Breast epithelium (tissue), 4 donors: ENCODE measurements at regions of chr9 and their contacts with region 1.

Region 1: DNA sequence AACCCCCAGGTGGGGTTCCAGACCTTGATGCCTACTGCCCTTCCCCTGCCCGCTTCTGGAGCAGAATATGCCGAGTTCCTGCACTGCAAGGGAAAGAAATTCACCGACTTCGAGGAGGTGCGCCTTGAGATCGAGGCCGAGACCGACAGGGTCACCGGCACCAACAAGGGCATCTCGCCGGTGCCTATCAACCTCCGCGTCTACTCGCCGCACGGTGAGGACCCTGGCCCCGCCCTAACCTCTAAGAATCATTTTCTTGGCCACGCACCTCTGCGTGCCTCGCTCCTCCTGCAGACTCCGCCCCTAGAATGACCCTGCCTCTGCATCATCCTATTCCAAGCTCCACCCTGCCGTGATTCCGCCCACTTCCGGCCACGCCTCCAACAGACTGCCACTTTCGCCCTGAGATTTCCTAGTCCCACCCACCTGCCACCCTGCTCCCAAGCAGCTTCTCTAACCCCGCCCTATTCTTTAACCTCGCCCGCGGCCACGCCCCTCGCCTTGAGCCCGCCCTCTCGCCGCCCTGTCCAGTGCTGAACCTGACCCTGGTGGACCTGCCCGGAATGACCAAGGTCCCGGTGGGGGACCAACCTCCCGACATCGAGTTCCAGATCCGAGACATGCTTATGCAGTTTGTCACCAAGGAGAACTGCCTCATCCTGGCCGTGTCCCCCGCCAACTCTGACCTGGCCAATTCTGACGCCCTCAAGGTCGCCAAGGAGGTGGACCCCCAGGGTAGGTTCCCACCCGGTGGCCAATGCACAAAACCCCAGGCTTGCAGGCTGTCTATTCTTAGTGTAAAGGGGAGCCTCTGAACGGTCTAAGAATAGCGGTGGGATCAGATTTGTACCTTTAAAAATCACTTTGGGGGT is 15.6 kb downstream of the DNM1 start:
- DNase-seq: peak; percentile 95 to 96
- H3K4me3 ChIP-seq: peak overlapping the region; percentile 23 to 63 (median 38)
- H3K27ac ChIP-seq: peak overlapping the region; percentile 35 to 53
- H3K4me1 ChIP-seq: no peaks in the 10 kb centered on the region
- H3K27me3 ChIP-seq: no peaks in the 10 kb centered on the region
- CTCF ChIP-seq: peak in 2 of 3 donors; percentile 18 to 19
- POLR2A ChIP-seq: no peak

Region 2: GRCh38 chr9:128750926-128751595 is 532.3 kb after region 1 on chr9:
- intact Hi-C with region 1: loop called (anchors 5 kb)
- DNase-seq: no peak
- H3K4me3 ChIP-seq: no peak overlapping the region
- H3K27ac ChIP-seq: no peak overlapping the region
- H3K4me1 ChIP-seq: no peaks in the 10 kb centered on the region
- H3K27me3 ChIP-seq: no peaks in the 10 kb centered on the region
- CTCF ChIP-seq: no peak
- POLR2A ChIP-seq: no peak